GM12878 (cell line): ENCODE measurements at regions of chr6 and their contacts with region 1.

Region 1: DNA sequence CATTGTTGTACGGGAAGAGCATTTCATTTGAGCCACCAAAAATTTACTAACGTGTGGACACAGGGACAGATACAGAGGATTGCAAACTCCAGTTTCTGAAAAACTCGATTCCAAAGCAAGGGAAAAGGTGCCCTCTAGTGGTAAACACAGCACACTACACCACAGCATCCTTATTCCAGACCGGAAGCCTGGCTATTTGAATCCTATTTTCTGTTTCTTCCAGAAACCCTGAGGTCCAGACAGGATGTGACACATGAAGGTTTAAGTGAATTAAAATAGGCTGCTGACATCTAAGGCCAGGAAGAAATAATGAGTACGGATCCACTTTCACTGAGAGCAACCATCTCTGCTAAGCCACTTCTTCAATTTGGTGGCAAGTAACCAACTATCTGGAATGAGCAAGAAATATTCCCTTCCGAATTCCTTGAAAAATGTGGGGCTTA is 31.8 kb upstream of the GMPR start:
- DNase-seq: no peak
- ATAC-seq: peak; percentile 57
- H3K4me3 ChIP-seq: no peak overlapping the region
- H3K27ac ChIP-seq: no peak overlapping the region
- H3K4me1 ChIP-seq: peaks cover 16% of the 10 kb centered on the region
- H3K27me3 ChIP-seq: peaks cover 0 to 3% of the 10 kb centered on the region in 2 experiments; a peak in 1 of 4 replicates
- CTCF ChIP-seq: peak; percentile 86 to 95 (median 93)
- EP300 ChIP-seq: no peak
- POLR2A ChIP-seq: no peak
- RAD21 ChIP-seq: peak; percentile 96

Region 2: GRCh38 chr6:15662326-15663129 is 544.1 kb before region 1 on chr6 and contains the start of gene DTNBP1:
- CTCF ChIA-PET with region 1: interaction called, 6 read pairs
- POLR2A ChIA-PET with region 1: no interaction called
- RAD21 ChIA-PET with region 1: interaction called, 6 read pairs
- SMC1A ChIA-PET with region 1: interaction called, 10 read pairs
- in situ Hi-C with region 1: no loop called
- intact Hi-C with region 1: no loop called
- DNase-seq: peak; percentile 40
- ATAC-seq: peak; percentile 85
- H3K4me3 ChIP-seq: peak within 1 kb of the TSS; percentile 90
- H3K27ac ChIP-seq: peak within 1 kb of the TSS; percentile 76
- H3K4me1 ChIP-seq: peaks cover 26% of the 10 kb centered on the region
- H3K27me3 ChIP-seq: no peaks in the 10 kb centered on the region; a peak in 1 of 4 replicates
- CTCF ChIP-seq: no peak
- EP300 ChIP-seq: no peak
- POLR2A ChIP-seq: peak; percentile 64
- RAD21 ChIP-seq: no peak
- polyA plus RNA-seq, gene DTNBP1: 10.9 to 20.2 TPM

Region 3: GRCh38 chr6:16136621-16137450 is 69.8 kb before region 1 on chr6:
- CTCF ChIA-PET with region 1: interaction called, 34 read pairs
- POLR2A ChIA-PET with region 1: no interaction called
- RAD21 ChIA-PET with region 1: interaction called, 15 read pairs
- SMC1A ChIA-PET with region 1: interaction called, 40 read pairs
- in situ Hi-C with region 1: no loop called
- intact Hi-C with region 1: no loop called
- DNase-seq: no peak
- ATAC-seq: peak; percentile 53
- H3K4me3 ChIP-seq: peak overlapping the region; percentile 47; the same call in 1 of the 2 replicates
- H3K27ac ChIP-seq: no peak overlapping the region
- H3K4me1 ChIP-seq: peaks cover 6% of the 10 kb centered on the region; the same call in 1 of the 2 replicates
- H3K27me3 ChIP-seq: no peaks in the 10 kb centered on the region
- CTCF ChIP-seq: no peak
- EP300 ChIP-seq: no peak
- POLR2A ChIP-seq: no peak
- RAD21 ChIP-seq: no peak

Region 4: DNA sequence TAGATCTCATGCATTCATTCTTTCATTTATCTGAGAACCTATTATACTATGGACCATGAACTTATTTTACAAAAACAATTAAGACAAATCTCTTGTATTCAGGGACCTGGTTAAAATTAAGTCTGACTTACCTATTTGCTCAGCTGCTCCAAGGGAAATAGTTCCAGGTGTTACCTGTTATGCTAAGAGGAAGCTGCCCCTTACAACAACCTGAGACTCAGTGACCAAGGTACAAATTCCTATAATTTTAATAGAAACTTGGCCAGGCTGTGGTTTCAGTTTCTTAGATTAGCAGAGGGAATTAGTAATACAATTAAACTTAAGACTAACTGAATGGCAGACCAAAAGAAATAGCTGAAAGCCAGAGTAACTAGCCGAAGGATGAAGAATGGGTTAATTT is 16.4 kb before region 1 on chr6:
- CTCF ChIA-PET with region 1: interaction called, 14 read pairs
- POLR2A ChIA-PET with region 1: no interaction called
- RAD21 ChIA-PET with region 1: interaction called, 6 read pairs
- SMC1A ChIA-PET with region 1: interaction called, 46 read pairs
- in situ Hi-C with region 1: no loop called
- intact Hi-C with region 1: no loop called
- DNase-seq: no peak
- ATAC-seq: no peak
- H3K4me3 ChIP-seq: no peak overlapping the region
- H3K27ac ChIP-seq: no peak overlapping the region
- H3K4me1 ChIP-seq: no peaks in the 10 kb centered on the region
- H3K27me3 ChIP-seq: no peaks in the 10 kb centered on the region; a peak in 3 of 4 replicates
- CTCF ChIP-seq: no peak
- EP300 ChIP-seq: no peak
- POLR2A ChIP-seq: no peak
- RAD21 ChIP-seq: no peak